AG04450 (cell line): ENCODE measurements at regions of chr4 and their contacts with region 1.

Region 1: GRCh38 chr4:24131954-24132673 is 242.3 kb upstream of the PPARGC1A start:
- DNase-seq: no peak
- H3K4me3 ChIP-seq: no peak overlapping the region
- H3K27ac ChIP-seq: no peak overlapping the region
- H3K27me3 ChIP-seq: peaks cover 3% of the 10 kb centered on the region
- CTCF ChIP-seq: no peak

Region 2: GRCh38 chr4:24103434-24104157 is 28.5 kb before region 1 on chr4:
- CTCF ChIA-PET with region 1: no interaction called
- POLR2A ChIA-PET with region 1: interaction called, 14 read pairs
- DNase-seq: no peak
- H3K4me3 ChIP-seq: no peak overlapping the region
- H3K27ac ChIP-seq: peak overlapping the region; percentile 93
- H3K27me3 ChIP-seq: no peaks in the 10 kb centered on the region
- CTCF ChIP-seq: no peak

Region 3: DNA sequence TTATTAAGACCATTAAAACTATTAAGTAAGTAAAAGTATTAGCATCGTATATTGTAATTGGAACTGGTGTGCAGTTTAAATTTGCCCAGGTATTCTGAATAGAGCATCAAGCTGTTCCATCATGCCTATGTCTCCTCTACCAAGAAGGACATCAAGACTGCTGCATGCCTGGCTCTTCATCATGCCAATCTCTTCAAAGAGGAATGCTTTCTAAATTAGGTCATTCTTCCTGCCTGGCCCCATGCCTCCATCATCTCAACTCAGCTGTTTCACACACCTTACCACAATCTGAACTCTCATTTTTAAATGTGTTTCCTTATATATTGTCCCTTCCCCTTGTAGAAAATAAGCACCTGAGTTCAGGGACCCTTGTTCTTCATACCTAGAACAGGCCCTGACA is 28.2 kb after region 1 on chr4:
- CTCF ChIA-PET with region 1: no interaction called
- POLR2A ChIA-PET with region 1: no interaction called
- DNase-seq: no peak
- H3K4me3 ChIP-seq: no peak overlapping the region
- H3K27ac ChIP-seq: no peak overlapping the region
- H3K27me3 ChIP-seq: peaks cover 4% of the 10 kb centered on the region
- CTCF ChIP-seq: no peak